Right ventricle myocardium superior (tissue), 1 donor: ENCODE measurements at regions of chr3 and their contacts with region 1.

Region 1: GRCh38 chr3:187164885-187165543 is 25.7 kb upstream of the RPL39L start:
- DNase-seq: no peak
- ATAC-seq: peak; percentile 40

Region 2: GRCh38 chr3:186849374-186849975 is 315.5 kb before region 1 on chr3:
- intact Hi-C with region 1: loop called (anchors 5 kb)
- DNase-seq: no peak
- ATAC-seq: peak; percentile 80

Region 3: DNA sequence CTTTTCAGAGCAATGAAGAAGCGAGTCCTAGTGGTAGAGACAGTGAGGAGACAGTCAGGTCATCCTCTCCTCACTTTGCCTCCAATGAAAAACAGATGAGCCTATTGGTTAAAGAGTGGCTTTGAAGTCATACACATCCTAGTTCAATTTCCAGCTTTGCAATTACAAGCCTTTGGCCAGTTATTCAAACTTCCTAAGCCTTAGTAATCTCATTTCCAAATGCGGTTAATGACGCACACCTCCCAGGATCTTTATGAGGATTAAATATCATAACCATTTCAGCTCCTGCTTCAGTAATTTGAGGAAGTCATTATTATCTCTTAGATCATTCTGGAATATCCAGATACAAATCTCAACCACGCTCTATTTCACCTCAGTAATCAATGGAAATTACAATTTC is 244.7 kb before region 1 on chr3:
- intact Hi-C with region 1: loop called (anchors 10 kb)
- DNase-seq: no peak
- ATAC-seq: no peak

Region 4: GRCh38 chr3:187072511-187072910 is 92.5 kb before region 1 on chr3:
- intact Hi-C with region 1: no loop called
- DNase-seq: no peak
- ATAC-seq: no peak